H1 (cell line): ENCODE measurements at regions of chr9 and their contacts with region 1.

Region 1: DNA sequence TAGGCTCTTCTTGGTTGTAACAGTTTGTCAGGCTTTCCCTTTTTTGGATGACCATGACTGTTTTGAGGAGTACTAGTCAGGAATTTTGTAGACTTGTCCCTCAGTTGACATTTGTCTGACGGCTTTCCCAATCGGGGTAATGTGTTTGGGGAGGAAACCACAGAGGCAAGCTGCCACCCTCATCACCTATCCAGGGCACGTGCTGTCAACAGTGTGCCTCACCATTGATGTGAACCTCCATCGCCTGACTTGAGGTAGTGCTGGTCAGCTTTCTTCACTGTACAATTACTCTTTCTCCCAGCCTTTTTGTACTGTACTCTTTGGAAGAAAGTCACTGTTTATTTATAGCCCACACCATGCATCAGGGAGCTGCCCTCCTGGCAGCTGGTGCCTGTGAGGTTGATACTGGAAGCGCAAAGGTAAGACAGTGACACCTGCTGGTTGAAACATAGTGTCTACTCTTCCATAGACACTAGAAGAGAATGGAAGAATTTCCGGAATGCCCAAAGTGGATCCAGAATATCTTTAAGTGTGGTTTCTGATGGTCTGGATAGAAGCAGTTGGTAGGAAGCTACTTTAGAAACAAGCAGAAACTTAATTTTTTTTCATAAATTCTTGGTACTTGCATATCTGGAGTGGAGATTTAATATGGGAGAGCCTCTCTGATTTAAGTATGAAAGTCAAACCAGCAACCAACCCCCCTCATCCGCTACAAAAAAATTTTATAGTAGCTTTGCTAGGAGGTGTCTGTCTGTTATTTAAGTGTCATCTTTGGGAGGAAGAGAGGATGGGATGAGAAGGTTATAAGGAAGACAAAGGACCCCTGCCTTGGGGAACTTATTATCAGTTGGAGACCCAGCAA is 69.3 kb downstream of the SNX30 start:
- DNase-seq: no peak
- H3K4me3 ChIP-seq: no peak overlapping the region
- H3K27ac ChIP-seq: no peak overlapping the region
- H3K4me1 ChIP-seq: no peaks in the 10 kb centered on the region
- H3K27me3 ChIP-seq: no peaks in the 10 kb centered on the region
- CTCF ChIP-seq: peak; percentile 38 to 78 (median 72)
- EP300 ChIP-seq: no peak
- POLR2A ChIP-seq: no peak
- RAD21 ChIP-seq: peak; percentile 81 to 87

Region 2: DNA sequence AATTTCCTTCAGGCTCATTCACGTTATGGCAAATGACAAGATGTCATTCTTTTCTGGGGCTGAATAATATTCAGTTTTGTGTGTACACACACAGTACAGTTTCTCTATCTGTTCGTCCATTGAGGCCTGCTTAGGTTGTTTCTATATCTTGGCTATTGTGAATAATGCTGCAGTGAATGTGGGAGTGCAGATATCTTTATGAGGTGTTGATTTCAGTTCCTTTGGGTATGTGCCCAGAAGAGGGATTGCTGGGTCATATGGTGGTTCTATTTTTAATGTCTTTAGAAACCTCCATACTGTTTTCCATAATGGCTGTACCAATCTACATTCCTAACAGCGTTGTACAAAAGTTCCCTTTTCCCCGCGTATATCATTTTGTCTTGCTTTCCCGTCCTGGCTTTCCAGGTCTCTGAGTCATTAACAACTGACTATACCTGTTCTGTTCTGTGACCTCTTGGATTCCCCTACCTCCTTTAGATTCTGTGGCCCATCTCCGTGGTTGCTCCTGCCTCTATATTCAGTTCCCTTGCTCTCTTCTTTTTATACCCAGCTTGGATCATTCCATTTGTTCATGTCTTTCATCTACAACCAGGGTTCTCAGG is 62.5 kb before region 1 on chr9:
- CTCF ChIA-PET with region 1: no interaction called
- POLR2A ChIA-PET with region 1: no interaction called
- DNase-seq: no peak
- H3K4me3 ChIP-seq: no peak overlapping the region
- H3K27ac ChIP-seq: no peak overlapping the region
- H3K4me1 ChIP-seq: no peaks in the 10 kb centered on the region
- H3K27me3 ChIP-seq: no peaks in the 10 kb centered on the region
- CTCF ChIP-seq: no peak
- EP300 ChIP-seq: no peak
- POLR2A ChIP-seq: no peak
- RAD21 ChIP-seq: no peak

Region 3: DNA sequence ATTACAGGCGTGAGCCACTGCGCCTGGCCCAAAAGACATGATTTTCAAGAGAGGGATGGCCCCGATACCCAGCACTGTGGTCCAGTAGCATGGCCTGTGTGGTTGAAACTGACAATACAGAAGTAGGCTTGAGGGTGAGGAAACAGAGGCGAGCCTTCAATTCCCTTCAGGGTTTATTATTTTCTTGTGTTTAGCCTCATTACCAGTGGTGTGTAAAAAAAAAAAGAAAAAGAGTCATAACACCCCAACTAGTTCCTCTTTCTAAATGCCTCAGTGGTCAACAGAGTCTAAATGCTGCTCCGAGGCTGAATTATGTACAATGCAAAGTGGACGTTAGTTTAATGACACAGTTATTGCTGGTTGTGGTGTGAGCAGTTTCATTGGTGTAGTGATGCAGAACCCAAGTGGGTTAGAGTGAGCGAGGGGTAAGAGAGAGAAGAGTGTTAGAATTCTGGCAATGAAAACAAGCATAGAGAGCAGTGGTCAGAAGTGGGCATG is 10.5 kb before region 1 on chr9:
- CTCF ChIA-PET with region 1: interaction called, 12 read pairs
- POLR2A ChIA-PET with region 1: interaction called, 3 read pairs
- DNase-seq: no peak
- H3K4me3 ChIP-seq: no peak overlapping the region
- H3K27ac ChIP-seq: no peak overlapping the region
- H3K4me1 ChIP-seq: peaks cover 0 to 7% (median 4%) of the 10 kb centered on the region in 4 experiments; a peak in 5 of 7 replicates
- H3K27me3 ChIP-seq: no peaks in the 10 kb centered on the region
- CTCF ChIP-seq: no peak
- EP300 ChIP-seq: no peak
- POLR2A ChIP-seq: no peak
- RAD21 ChIP-seq: no peak